Common myeloid progenitor, CD34-positive (primary cell): ENCODE measurements at regions of chr7 and their contacts with region 1.

Region 1: GRCh38 chr7:143380255-143380645 is 895 bp upstream of the ZYX start:
- DNase-seq: peak; percentile 93 to 97 (median 95)
- H3K4me3 ChIP-seq: peak overlapping the region; percentile 78 to 95 (median 88)
- H3K27ac ChIP-seq: peak overlapping the region; percentile 92 to 94
- H3K4me1 ChIP-seq: peaks cover 31 to 85% (median 66%) of the 10 kb centered on the region in 4 experiments
- H3K27me3 ChIP-seq: no peaks in the 10 kb centered on the region

Region 2: DNA sequence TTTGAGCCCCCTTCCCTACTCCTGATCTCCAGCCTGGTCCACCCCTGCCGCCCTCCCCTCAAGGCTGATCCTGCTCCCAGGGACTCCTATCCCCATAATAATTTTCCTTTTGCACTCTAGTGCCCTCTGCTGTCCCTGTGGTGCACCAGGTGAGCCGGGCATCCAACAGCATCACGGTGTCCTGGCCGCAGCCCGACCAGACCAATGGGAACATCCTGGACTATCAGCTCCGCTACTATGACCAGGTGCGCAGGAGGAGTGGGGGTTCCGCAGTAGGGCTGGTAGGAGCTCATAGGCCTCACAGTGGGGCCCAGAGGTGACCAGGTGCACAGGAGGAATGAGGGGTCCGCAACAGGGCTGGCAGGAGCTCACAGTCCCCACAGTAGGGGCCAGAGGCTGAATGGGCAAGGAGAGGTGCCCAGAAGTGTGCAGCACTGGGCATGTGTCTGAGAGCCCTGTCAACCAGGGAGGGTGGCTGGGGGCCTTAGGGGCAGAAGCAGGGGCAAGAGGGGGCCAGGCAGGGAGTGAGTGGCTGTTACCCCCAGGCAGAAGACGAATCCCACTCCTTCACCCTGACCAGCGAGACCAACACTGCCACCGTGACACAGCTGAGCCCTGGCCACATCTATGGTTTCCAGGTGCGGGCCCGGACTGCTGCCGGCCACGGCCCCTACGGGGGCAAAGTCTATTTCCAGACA is 513.7 kb before region 1 on chr7:
- CTCF ChIA-PET with region 1: no interaction called
- POLR2A ChIA-PET with region 1: no interaction called
- DNase-seq: no peak
- H3K4me3 ChIP-seq: no peak overlapping the region
- H3K27ac ChIP-seq: no peak overlapping the region
- H3K4me1 ChIP-seq: peaks cover 0 to 16% (median 15%) of the 10 kb centered on the region in 4 experiments
- H3K27me3 ChIP-seq: no peaks in the 10 kb centered on the region

Region 3: DNA sequence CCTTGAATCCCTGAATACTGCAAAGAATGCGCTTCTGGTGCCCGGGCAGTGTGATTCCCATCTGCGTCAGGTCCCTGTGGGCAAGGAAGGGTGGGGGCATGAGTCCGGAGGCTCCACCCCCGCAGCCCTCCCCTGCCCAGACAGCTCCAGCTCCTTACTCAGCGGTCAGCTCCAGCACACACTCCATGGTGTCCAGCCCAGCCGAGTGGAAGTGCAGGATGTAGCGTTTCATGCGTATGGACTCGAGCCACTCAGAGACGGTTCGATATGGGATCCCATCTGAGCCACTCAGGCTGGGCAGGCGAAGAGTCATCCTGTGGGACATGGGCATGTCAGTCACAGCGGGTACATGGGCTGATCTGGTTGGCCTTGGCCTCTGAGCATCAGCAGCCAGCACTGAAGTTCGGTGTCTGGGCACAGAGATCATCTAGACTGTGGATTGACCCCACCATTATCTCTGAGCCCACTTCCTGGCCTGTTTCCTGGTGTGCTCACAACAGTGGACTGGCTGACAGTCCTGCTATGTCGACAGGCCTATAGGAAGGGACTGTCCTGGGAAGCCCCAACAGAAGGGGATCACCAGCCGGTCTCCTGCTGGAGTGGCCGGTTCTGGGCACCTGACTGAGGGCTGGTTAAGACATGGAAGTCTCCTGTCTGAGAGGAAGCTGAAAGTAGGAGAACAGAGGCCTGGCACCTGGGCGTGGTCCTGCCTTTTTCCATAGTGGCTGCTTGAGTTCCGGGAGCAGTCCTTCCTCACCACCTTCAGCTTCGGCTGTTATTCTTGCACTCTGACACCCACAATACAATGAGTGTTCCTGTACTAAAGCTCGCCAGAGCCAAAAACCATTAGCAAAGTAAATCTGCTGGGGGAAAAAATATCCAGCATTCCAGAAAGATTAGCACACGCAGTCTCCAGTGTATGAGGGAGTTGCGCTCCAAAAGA is 11.5 kb after region 1 on chr7:
- CTCF ChIA-PET with region 1: interaction called, 38 read pairs
- POLR2A ChIA-PET with region 1: interaction called, 10 read pairs
- DNase-seq: no peak
- H3K4me3 ChIP-seq: no peak overlapping the region
- H3K27ac ChIP-seq: no peak overlapping the region
- H3K4me1 ChIP-seq: peaks cover 0 to 42% (median 35%) of the 10 kb centered on the region in 4 experiments
- H3K27me3 ChIP-seq: no peaks in the 10 kb centered on the region